Tibial artery (tissue), 4 donors: ENCODE measurements at regions of chr16 and their contacts with region 1.

Region 1: GRCh38 chr16:21565861-21566669 is 33.3 kb upstream of the METTL9 start:
- DNase-seq: no peak
- H3K4me3 ChIP-seq: no peak overlapping the region
- H3K27ac ChIP-seq: no peak overlapping the region
- H3K4me1 ChIP-seq: peaks cover 0 to 14% (median 0%) of the 10 kb centered on the region in 4 donors
- H3K27me3 ChIP-seq: no peaks in the 10 kb centered on the region
- CTCF ChIP-seq: no peak

Region 2: GRCh38 chr16:20014034-20014433 is 1552.0 kb before region 1 on chr16:
- intact Hi-C with region 1: no loop called
- DNase-seq: no peak
- H3K4me3 ChIP-seq: no peak overlapping the region
- H3K27ac ChIP-seq: no peak overlapping the region
- H3K4me1 ChIP-seq: no peaks in the 10 kb centered on the region
- H3K27me3 ChIP-seq: no peaks in the 10 kb centered on the region
- CTCF ChIP-seq: no peak

Region 3: GRCh38 chr16:21646721-21647561 is 80.9 kb after region 1 on chr16:
- intact Hi-C with region 1: no loop called
- DNase-seq: no peak
- H3K4me3 ChIP-seq: no peak overlapping the region
- H3K27ac ChIP-seq: no peak overlapping the region
- H3K4me1 ChIP-seq: no peaks in the 10 kb centered on the region
- H3K27me3 ChIP-seq: no peaks in the 10 kb centered on the region
- CTCF ChIP-seq: no peak

Region 4: GRCh38 chr16:22694887-22695382 is 1128.9 kb after region 1 on chr16:
- intact Hi-C with region 1: loop called (anchors 5 kb)
- DNase-seq: peak; percentile 50 to 79
- H3K4me3 ChIP-seq: peak overlapping the region; percentile 5 to 10
- H3K27ac ChIP-seq: peak overlapping the region; percentile 79 to 82
- H3K4me1 ChIP-seq: peaks cover 0 to 49% (median 11%) of the 10 kb centered on the region in 4 donors
- H3K27me3 ChIP-seq: no peaks in the 10 kb centered on the region
- CTCF ChIP-seq: no peak